Activated naive CD4-positive, alpha-beta T cell treated with anti-CD3 and anti-CD28 coated beads for 36 hours (primary cell): ENCODE measurements at regions of chr3 and their contacts with region 1.

Region 1: GRCh38 chr3:48088749-48089466 is 72.7 kb upstream of the MAP4 start:
- DNase-seq: peak; percentile 95
- H3K4me3 Mint-ChIP-seq: peak overlapping the region; percentile 94
- H3K27ac Mint-ChIP-seq: peak overlapping the region; percentile 95
- H3K4me1 Mint-ChIP-seq: peaks cover 29% of the 10 kb centered on the region
- H3K27me3 Mint-ChIP-seq: no peaks in the 10 kb centered on the region

Region 2: DNA sequence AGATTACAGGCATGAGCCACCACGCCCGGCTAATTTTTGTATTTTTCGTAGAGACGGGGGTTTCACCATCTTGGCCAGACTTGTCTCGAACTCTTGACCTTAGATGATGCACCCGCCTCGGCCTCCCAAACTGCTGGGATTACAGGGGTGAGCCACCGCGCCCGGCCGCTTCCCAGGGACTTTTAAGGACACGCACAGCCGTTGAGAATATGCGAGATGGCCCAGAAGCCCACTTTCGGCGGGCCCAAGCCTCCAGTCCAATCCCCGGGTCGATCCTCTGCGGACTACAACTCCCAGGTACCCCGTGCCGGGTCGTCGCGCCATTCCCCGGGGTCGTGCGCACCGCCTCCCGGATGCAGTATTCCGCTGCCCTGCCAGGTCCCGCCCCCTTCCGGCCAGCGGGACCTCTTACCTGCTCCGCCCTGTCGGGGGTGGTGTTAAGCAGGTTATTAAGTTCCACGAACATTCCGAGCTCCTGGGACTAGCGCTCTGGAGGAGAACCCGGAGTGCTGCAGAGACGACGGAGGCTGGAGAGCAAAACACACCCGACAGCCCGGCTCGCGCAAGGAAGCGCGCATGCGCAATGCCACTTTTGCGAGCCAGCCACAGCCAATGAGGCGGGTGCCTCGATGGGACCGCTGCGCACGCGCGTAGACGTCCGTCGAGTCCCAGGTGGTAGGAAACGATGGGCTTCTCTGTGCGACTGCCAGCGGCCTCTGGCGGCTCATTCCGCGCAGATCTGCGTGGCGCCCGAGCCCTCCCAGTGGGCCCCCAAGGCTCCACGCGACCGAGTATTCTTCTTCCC is 575.6 kb before region 1 on chr3 and contains the start of gene ELP6:
- CTCF ChIA-PET with region 1: no interaction called
- intact Hi-C with region 1: loop called (anchors 2 kb)
- DNase-seq: peak; percentile 98
- H3K4me3 Mint-ChIP-seq: peak within 1 kb of the TSS; percentile 96
- H3K27ac Mint-ChIP-seq: peak within 1 kb of the TSS; percentile 97
- H3K4me1 Mint-ChIP-seq: peaks cover 15% of the 10 kb centered on the region
- H3K27me3 Mint-ChIP-seq: no peaks in the 10 kb centered on the region
- total RNA-seq, gene ELP6: 32.7 to 33.1 TPM

Region 3: GRCh38 chr3:47802734-47803477 is 286.0 kb before region 1 on chr3 and contains the start of gene DHX30:
- CTCF ChIA-PET with region 1: no interaction called
- intact Hi-C with region 1: loop called (anchors 2 kb)
- DNase-seq: peak; percentile 87
- H3K4me3 Mint-ChIP-seq: peak within 1 kb of the TSS; percentile 96
- H3K27ac Mint-ChIP-seq: peak within 1 kb of the TSS; percentile 92
- H3K4me1 Mint-ChIP-seq: peaks cover 21% of the 10 kb centered on the region
- H3K27me3 Mint-ChIP-seq: no peaks in the 10 kb centered on the region
- total RNA-seq, gene DHX30: 65.6 to 69.9 TPM

Region 4: DNA sequence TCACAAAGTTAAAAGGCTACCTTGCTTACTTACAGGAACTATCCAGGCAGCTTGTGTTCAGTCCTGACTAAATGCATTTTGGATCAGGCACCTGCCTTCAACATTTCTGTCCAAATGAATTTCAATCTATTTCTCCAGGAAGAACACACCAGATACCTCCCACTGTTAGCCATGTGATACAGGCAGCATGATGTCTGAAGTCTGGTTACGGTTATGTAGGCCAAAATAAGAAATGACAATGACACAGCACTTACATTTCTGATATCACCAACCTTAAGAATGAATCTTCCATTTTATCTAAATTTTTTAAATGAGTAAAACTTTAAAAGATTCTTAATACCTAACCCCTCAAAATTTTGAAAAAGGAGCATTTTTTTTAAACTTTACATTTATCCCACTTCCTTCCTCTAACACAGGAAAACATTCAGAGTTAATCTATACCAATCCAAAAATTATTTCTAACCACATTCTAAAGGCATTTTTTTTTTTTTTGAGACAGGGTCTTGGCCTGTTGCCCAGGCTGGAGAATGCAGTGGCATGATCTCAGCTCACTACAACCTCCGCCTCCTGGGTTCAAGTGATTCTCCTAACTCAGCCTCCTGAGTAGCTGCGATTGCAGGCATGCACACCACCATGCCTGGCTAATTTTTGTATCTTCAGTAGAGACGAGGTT is 72.5 kb before region 1 on chr3 and contains the start of gene MAP4:
- CTCF ChIA-PET with region 1: no interaction called
- intact Hi-C with region 1: loop called (anchors 5 kb)
- DNase-seq: no peak
- H3K4me3 Mint-ChIP-seq: no peak within 1 kb of the TSS
- H3K27ac Mint-ChIP-seq: no peak within 1 kb of the TSS
- H3K4me1 Mint-ChIP-seq: peaks cover 37% of the 10 kb centered on the region
- H3K27me3 Mint-ChIP-seq: no peaks in the 10 kb centered on the region
- total RNA-seq, gene MAP4: 75.9 to 78.2 TPM

Region 5: GRCh38 chr3:48107227-48107626 is 18.3 kb after region 1 on chr3:
- CTCF ChIA-PET with region 1: no interaction called
- intact Hi-C with region 1: no loop called
- DNase-seq: no peak
- H3K4me3 Mint-ChIP-seq: no peak overlapping the region
- H3K27ac Mint-ChIP-seq: no peak overlapping the region
- H3K4me1 Mint-ChIP-seq: no peaks in the 10 kb centered on the region
- H3K27me3 Mint-ChIP-seq: no peaks in the 10 kb centered on the region

Region 6: GRCh38 chr3:48151058-48151806 is 62.3 kb after region 1 on chr3:
- CTCF ChIA-PET with region 1: interaction called, 3 read pairs
- intact Hi-C with region 1: loop called (anchors 5 kb)
- DNase-seq: peak; percentile 75
- H3K4me3 Mint-ChIP-seq: no peak overlapping the region
- H3K27ac Mint-ChIP-seq: no peak overlapping the region
- H3K4me1 Mint-ChIP-seq: no peaks in the 10 kb centered on the region
- H3K27me3 Mint-ChIP-seq: no peaks in the 10 kb centered on the region

Region 7: GRCh38 chr3:48240711-48241491 is 152.0 kb after region 1 on chr3 and contains the start of gene ZNF589:
- CTCF ChIA-PET with region 1: no interaction called
- intact Hi-C with region 1: loop called (anchors 2 kb)
- DNase-seq: peak; percentile 96
- H3K4me3 Mint-ChIP-seq: peak within 1 kb of the TSS; percentile 88
- H3K27ac Mint-ChIP-seq: peak within 1 kb of the TSS; percentile 86
- H3K4me1 Mint-ChIP-seq: peaks cover 28% of the 10 kb centered on the region
- H3K27me3 Mint-ChIP-seq: no peaks in the 10 kb centered on the region
- total RNA-seq, gene ZNF589: 15.8 to 16.3 TPM

Region 8: GRCh38 chr3:48301020-48301796 is 212.3 kb after region 1 on chr3:
- CTCF ChIA-PET with region 1: no interaction called
- intact Hi-C with region 1: loop called (anchors 2 kb)
- DNase-seq: peak; percentile 94
- H3K4me3 Mint-ChIP-seq: peak within 1 kb of the TSS; percentile 94
- H3K27ac Mint-ChIP-seq: peak within 1 kb of the TSS; percentile 96
- H3K4me1 Mint-ChIP-seq: peaks cover 28% of the 10 kb centered on the region
- H3K27me3 Mint-ChIP-seq: no peaks in the 10 kb centered on the region